Left ventricle myocardium inferior (tissue), 1 donor: ENCODE measurements at regions of chr17 and their contacts with region 1.

Region 1: DNA sequence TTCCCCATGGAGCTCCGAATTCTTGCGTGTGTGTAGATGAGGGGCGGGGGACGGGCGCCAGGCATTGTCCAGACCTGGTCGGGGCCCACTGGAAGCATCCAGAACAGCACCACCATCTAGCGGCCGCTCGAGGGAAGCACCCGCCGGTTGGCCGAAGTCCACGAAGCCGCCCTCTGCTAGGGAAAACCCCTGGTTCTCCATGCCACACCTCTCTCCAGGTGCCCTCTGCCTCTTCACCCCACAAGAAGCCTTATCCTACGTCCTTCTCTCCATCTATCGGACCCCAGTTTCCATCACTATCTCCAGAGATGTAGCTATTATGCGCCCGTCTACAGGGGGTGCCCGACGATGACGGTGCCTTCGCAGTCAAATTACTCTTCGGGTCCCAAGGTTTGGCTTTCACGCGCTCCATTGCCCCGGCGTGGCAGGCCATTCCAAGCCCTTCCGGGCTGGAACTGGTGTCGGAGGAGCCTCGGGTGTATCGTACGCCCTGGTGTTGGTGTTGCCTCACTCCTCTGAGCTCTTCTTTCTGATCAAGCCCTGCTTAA is 617 bp upstream of the SENP3 start:
- DNase-seq: peak; percentile 91
- H3K4me3 ChIP-seq: peak overlapping the region; percentile 99
- H3K27ac ChIP-seq: peak overlapping the region; percentile 94
- H3K4me1 ChIP-seq: peaks cover 81% of the 10 kb centered on the region
- H3K27me3 ChIP-seq: no peaks in the 10 kb centered on the region
- CTCF ChIP-seq: peak; percentile 90

Region 2: DNA sequence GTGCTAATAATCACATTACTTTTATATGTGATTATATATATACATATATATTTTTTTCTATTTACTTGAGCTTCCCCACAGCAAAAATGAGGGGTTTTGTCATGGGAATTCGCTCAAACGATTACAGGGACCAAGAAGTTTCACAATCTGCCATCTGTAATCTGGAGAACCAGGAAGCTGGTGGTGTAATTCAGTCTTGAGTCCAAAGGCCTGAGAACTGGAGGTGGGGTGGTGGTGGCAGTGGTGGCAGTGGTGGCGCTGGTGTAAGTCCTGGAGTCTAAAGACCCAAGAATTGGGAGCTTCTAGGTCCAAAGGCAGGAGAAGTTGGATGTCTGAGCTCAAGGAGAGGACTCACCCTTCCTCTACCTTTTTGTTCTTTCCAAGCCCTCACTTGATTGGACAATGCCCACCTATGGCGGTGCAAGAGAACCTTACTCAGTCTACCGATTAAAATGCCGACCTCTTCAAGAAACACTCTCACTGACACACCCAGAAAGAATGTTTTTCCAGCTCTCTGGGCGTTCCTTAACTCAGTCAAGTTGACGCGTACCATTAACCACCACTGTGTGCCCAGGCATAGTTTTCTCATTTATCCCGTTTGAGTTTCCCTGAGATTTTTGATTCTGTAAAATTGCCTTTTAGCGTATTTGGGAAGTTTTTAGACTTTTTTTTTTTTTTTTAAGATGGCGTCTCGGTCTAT is 45.0 kb before region 1 on chr17:
- intact Hi-C with region 1: loop called (anchors 10 kb)
- DNase-seq: no peak
- H3K4me3 ChIP-seq: no peak overlapping the region
- H3K27ac ChIP-seq: no peak overlapping the region
- H3K4me1 ChIP-seq: peaks cover 3% of the 10 kb centered on the region
- H3K27me3 ChIP-seq: no peaks in the 10 kb centered on the region
- CTCF ChIP-seq: no peak

Region 3: DNA sequence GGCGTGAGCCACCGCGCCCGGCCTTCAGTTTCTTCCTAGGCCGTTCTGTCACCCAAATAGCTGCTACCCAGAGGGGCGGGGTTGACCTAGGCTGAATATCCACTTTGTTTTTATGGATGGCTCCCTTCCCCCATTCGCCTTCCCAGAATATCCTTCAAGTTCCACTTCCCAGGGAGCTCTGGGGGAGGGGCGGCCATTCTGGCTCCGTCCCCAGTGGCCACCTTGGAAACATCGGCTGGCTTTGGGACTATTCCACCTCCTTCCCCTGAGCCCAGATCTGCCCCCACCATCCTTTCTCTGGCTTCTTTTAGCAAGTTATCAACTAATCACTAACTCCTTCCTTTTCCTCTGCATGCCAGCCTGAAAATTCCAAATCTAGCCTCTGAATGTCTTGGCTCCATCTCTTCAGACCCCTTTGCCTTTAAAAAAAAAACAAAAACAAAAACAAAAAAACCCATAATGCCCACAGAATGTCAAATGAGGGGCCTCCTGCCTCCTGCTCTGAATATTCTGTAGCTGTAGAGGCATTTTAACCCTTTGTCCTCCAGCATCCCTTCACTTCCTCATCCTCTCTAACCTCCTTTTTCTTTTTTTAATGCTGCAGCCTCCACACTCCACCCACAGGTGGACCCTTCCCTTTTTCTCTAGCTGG is 96.0 kb after region 1 on chr17:
- intact Hi-C with region 1: no loop called
- DNase-seq: peak; percentile 73
- H3K4me3 ChIP-seq: no peak overlapping the region
- H3K27ac ChIP-seq: peak overlapping the region; percentile 55
- H3K4me1 ChIP-seq: peaks cover 15% of the 10 kb centered on the region
- H3K27me3 ChIP-seq: peaks cover 7% of the 10 kb centered on the region
- CTCF ChIP-seq: no peak

Region 4: DNA sequence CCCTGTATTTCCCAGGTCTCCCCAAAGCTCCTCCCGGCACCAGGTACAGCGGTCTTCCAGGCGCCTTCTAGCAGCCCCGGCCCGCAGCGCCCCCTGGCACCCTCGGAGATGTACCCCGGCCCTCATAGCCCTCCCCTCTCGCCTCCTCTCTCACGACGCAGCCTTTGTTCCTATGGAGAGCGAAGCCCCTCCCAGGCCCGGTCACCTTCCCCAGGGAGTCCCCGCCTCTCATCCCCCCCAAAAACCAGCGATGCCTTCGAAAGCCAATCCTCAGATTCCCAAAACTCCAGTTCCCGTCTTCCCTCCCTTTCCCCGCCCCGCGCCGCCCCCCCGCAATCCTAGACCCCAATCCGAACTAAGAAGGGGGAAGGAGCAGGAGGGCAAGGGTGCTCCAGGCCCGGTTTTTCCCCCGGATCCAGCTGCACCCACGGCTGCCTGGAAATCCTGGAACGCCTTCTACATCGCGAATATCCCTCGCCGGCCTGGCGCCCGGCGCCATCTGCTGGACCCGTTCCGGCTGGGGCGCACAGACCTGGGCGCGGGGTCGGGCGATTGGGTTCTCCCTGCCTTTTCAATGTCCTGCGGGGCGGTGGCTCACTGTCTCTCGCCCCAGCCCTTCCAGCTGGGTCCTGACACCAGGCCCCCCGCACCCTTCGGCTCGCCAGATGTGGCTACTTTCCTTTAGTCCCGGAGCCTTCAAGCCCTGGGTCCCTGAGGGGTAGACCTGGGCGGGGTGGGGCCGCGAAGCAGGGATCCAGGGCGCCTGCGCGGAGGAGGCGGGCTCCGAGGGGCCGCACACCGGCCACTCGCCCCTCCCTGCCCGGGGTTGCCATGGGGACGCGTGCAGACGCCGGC is 156.0 kb after region 1 on chr17 and contains the start of gene DNAH2:
- intact Hi-C with region 1: no loop called
- DNase-seq: peak; percentile 69
- H3K4me3 ChIP-seq: peak within 1 kb of the TSS; percentile 78
- H3K27ac ChIP-seq: peak within 1 kb of the TSS; percentile 48
- H3K4me1 ChIP-seq: peaks cover 19% of the 10 kb centered on the region
- H3K27me3 ChIP-seq: peaks cover 70% of the 10 kb centered on the region
- CTCF ChIP-seq: peak; percentile 56
- total RNA-seq, gene DNAH2: 0.33 TPM